ENCODE measurements at regions of chr6 and their contacts with region 1.

Region 1: DNA sequence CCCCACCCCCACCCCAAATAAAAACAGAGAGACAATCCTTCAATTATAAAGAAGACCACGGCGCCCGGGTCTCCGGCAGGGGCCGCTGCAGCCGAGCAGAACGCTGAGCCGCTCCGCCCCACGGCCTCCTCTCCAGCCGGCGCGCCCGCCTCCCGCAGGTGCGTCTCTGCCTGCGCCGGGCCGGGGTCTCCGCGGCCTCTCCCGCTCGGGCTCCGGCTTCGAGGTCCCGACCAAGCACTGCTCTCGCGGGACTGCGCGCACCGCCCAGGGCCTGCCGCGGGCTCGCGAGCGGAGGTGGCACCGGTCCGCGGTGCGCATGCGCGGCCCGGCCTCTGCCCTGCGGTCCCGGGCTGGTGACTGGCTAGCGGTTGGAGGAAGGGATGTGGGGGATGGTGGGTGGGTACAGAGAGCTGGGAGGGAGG is 241 bp upstream of the SIRT5 start:
- DNase-seq: peak; percentile 90 to 93
- ATAC-seq: peak; percentile 89 to 90
- H3K4me3 ChIP-seq: peak overlapping the region; percentile 91
- H3K27ac ChIP-seq: peak overlapping the region; percentile 99 to 100
- H3K4me1 ChIP-seq: peaks cover 6% of the 10 kb centered on the region; the same call in 1 of the 3 replicates
- CTCF ChIP-seq: peak; percentile 31; the same call in 2 of the 3 replicates
- EP300 ChIP-seq: no peak
- POLR2A ChIP-seq: peak; percentile 72
- RAD21 ChIP-seq: peak in 1 of 2 experiments; percentile 24; a peak in 1 of 5 replicates

Region 2: DNA sequence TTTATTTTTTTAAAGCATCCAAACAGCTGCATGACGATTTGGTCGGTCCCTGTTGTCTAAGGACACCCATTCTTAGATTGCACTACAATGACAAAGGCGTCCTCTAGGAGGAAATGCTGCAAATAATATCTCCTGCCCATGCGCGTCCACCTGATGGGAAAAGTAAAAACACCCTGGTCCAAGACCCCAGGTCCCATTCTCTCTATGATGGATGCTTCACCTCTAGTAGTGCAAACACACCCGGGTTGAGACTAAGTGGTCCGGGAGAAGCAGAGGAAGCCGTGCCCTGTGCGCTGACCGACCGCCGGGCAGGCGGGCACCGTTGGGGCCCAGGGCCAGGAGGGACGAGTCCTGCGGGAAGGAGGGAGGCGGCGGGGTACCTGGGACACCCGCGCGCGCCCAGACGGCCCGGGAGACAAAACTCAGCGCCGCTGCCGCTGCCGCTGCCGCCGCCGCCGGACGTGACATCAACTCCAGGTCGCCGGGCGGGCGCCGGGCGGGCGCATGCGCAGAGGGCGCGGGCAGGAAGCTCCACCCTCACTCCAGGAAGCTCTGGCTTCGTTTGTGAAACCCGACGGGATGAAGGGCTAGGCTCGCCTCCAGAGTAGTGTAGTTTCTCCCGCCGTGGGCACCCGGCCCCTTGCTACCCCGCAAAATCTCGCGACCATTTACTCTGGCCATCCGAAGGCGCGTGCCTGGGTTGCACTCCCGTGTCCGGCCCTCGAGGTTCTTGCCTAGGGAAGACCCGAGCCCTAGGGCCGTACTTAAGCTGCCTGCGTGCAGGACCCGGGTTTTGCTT is 245.9 kb before region 1 on chr6 and contains the start of gene TBC1D7:
- CTCF ChIA-PET with region 1: interaction called, 8 read pairs
- POLR2A ChIA-PET with region 1: interaction called, 13 read pairs
- DNase-seq: peak; percentile 62 to 91
- ATAC-seq: peak; percentile 93 to 96
- H3K4me3 ChIP-seq: peak within 1 kb of the TSS; percentile 67
- H3K27ac ChIP-seq: peak within 1 kb of the TSS; percentile 90 to 99
- H3K4me1 ChIP-seq: peaks cover 16% of the 10 kb centered on the region; the same call in 1 of the 3 replicates
- CTCF ChIP-seq: no peak
- EP300 ChIP-seq: no peak
- POLR2A ChIP-seq: peak; percentile 78
- RAD21 ChIP-seq: no peak
- polyA plus RNA-seq, gene TBC1D7: 55.9 and 78.3 TPM in 2 replicates

Region 3: DNA sequence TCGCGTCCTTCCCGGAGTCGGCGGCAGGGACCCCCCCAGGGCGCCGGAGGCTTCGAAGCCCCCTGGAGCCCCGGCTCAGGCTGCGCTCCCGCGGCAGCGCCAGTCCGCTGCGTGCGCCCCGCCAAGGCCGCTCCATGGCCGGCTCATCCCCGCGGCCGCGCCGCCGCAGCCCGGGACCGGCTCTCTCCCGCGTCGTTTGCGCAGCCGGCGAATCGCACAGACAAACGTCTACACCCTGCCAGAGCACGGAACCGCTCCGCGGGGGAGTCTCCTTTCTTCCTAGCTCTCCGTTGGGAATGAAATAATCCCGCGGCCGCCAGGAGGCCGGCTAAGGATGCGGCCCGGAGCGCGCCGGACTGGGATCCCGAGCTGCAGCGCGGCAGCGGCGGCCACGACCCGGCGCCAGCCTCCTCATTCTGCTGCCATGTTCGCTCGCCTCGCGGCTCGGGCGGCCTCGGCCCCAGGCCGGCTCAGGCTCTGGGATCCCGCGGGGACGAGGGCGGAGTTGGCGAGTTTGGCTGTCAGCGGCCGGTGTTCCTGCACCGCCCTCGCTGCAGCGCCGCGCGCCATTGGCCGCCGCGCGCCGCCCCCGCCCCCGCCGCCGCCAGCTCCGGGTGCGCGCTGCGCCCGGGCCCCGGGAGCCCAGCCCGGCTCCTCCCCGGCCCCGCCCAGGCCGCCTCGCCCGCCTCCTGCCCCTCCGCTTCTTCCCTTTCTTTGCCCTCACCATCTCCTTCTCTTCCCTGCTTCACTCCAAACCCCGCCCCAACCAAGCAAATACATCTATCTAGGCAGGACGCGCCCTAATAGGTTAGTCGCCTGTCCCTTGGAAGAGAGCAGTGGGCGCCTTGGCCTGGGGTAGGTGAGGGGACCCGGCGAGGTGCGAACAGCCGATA is 86.8 kb before region 1 on chr6 and contains the start of gene GFOD1:
- CTCF ChIA-PET with region 1: interaction called, 5 read pairs
- POLR2A ChIA-PET with region 1: interaction called, 25 read pairs
- DNase-seq: peak; percentile 61 to 77
- ATAC-seq: peak; percentile 79 to 85
- H3K4me3 ChIP-seq: peak within 1 kb of the TSS; percentile 69
- H3K27ac ChIP-seq: peak within 1 kb of the TSS; percentile 76 to 95
- H3K4me1 ChIP-seq: peaks cover 17% of the 10 kb centered on the region; the same call in 2 of the 3 replicates
- CTCF ChIP-seq: no peak
- EP300 ChIP-seq: no peak
- POLR2A ChIP-seq: peak; percentile 73
- RAD21 ChIP-seq: no peak
- polyA plus RNA-seq, gene GFOD1: 2.7 and 3.0 TPM in 2 replicates

Region 4: GRCh38 chr6:13538084-13538483 is 36.1 kb before region 1 on chr6:
- CTCF ChIA-PET with region 1: interaction called, 8 read pairs
- POLR2A ChIA-PET with region 1: interaction called, 11 read pairs
- DNase-seq: peak; percentile 43 to 46
- ATAC-seq: peak; percentile 56 to 70; a peak in 3 of 6 replicates
- H3K4me3 ChIP-seq: no peak overlapping the region
- H3K27ac ChIP-seq: no peak overlapping the region
- H3K4me1 ChIP-seq: no peaks in the 10 kb centered on the region
- CTCF ChIP-seq: peak; percentile 42
- EP300 ChIP-seq: no peak
- POLR2A ChIP-seq: no peak
- RAD21 ChIP-seq: peak; percentile 43 to 53

Region 5: GRCh38 chr6:13586603-13587542 is 12.7 kb after region 1 on chr6:
- CTCF ChIA-PET with region 1: interaction called, 12 read pairs
- POLR2A ChIA-PET with region 1: interaction called, 3 read pairs
- DNase-seq: no peak
- ATAC-seq: no peak
- H3K4me3 ChIP-seq: no peak overlapping the region
- H3K27ac ChIP-seq: no peak overlapping the region
- H3K4me1 ChIP-seq: no peaks in the 10 kb centered on the region
- CTCF ChIP-seq: no peak
- EP300 ChIP-seq: no peak
- POLR2A ChIP-seq: no peak
- RAD21 ChIP-seq: no peak

Region 6: DNA sequence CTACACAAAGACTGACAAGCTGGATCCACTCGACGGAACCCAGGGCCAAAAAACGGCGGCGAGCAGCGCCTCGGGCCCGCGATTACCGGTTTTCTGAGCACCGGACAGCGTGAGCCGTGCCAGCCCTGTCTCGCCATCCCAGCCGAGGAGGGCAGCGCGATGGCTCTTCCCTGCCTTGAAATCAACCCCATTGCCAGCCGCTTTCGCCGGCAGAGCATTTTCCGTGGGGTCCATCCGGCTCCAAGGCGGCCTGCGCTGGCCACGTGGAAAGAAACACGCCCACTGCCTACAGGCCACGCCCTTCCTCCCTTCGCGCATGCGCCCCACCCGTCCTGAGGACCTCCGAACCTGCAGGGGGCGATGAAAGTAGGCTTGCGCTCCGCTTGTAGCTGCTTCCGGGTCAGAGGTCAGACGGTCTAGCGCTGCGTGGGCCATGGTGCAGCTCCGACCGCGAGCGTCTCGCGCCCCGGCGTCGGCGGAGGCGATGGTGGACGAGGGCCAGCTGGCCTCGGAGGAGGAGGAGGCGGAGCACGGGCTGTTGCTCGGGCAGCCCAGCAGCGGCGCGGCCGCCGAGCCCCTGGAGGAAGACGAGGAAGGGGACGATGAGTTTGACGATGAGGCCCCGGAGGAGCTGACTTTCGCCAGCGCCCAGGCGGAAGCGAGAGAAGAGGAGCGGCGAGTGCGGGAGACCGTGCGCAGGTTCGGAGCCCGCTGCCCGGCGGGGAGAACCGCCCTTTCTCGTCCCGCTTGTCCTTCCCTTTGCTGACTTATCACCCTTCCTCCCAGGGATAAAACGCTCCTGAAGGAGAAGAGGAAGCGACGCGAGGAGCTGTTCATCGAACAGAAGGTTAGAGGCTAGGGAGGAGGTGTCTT is 41.0 kb after region 1 on chr6 and contains the start of gene NOL7:
- CTCF ChIA-PET with region 1: interaction called, 10 read pairs
- POLR2A ChIA-PET with region 1: interaction called, 40 read pairs
- DNase-seq: peak; percentile 77 to 98
- ATAC-seq: peak; percentile 87 to 95
- H3K4me3 ChIP-seq: peak within 1 kb of the TSS; percentile 94
- H3K27ac ChIP-seq: peak within 1 kb of the TSS; percentile 84 to 99
- H3K4me1 ChIP-seq: peaks cover 10% of the 10 kb centered on the region; the same call in 2 of the 3 replicates
- CTCF ChIP-seq: peak; percentile 55
- EP300 ChIP-seq: no peak
- POLR2A ChIP-seq: peak; percentile 69
- RAD21 ChIP-seq: peak in 1 of 2 experiments; percentile 12; a peak in 1 of 5 replicates
- polyA plus RNA-seq, gene NOL7: 41.2 and 75.1 TPM in 2 replicates

Region 7: GRCh38 chr6:13767121-13767808 is 193.1 kb after region 1 on chr6:
- CTCF ChIA-PET with region 1: no interaction called
- POLR2A ChIA-PET with region 1: no interaction called
- DNase-seq: no peak
- ATAC-seq: no peak
- H3K4me3 ChIP-seq: no peak overlapping the region
- H3K27ac ChIP-seq: no peak overlapping the region
- H3K4me1 ChIP-seq: no peaks in the 10 kb centered on the region
- CTCF ChIP-seq: no peak
- EP300 ChIP-seq: no peak
- POLR2A ChIP-seq: no peak
- RAD21 ChIP-seq: no peak

Measured in A549 (cell line).